Activated CD4-positive, alpha-beta memory T cell treated with anti-CD3 and anti-CD28 coated beads, Interleukin-2, amount 10 ng/mL, durations not matched to agents 7 days and 5 days (primary cell): ENCODE measurements at regions of chr1 and their contacts with region 1.

Region 1: GRCh38 chr1:29202584-29203340 is 21.1 kb upstream of the SRSF4 start:
- DNase-seq: peak; percentile 90
- H3K4me3 Mint-ChIP-seq: no peak overlapping the region
- H3K27ac Mint-ChIP-seq: no peak overlapping the region
- H3K4me1 Mint-ChIP-seq: peaks cover 6% of the 10 kb centered on the region
- H3K27me3 Mint-ChIP-seq: no peaks in the 10 kb centered on the region

Region 2: GRCh38 chr1:28782011-28782410 is 420.8 kb before region 1 on chr1:
- CTCF ChIA-PET with region 1: interaction called, 14 read pairs
- POLR2A ChIA-PET with region 1: no interaction called
- DNase-seq: no peak
- H3K4me3 Mint-ChIP-seq: no peak overlapping the region
- H3K27ac Mint-ChIP-seq: no peak overlapping the region
- H3K4me1 Mint-ChIP-seq: peaks cover 7% of the 10 kb centered on the region
- H3K27me3 Mint-ChIP-seq: peaks cover 12% of the 10 kb centered on the region

Region 3: GRCh38 chr1:29033829-29034466 is 168.8 kb before region 1 on chr1:
- CTCF ChIA-PET with region 1: interaction called, 26 read pairs
- POLR2A ChIA-PET with region 1: no interaction called
- DNase-seq: no peak
- H3K4me3 Mint-ChIP-seq: no peak overlapping the region
- H3K27ac Mint-ChIP-seq: no peak overlapping the region
- H3K4me1 Mint-ChIP-seq: no peaks in the 10 kb centered on the region
- H3K27me3 Mint-ChIP-seq: no peaks in the 10 kb centered on the region

Region 4: DNA sequence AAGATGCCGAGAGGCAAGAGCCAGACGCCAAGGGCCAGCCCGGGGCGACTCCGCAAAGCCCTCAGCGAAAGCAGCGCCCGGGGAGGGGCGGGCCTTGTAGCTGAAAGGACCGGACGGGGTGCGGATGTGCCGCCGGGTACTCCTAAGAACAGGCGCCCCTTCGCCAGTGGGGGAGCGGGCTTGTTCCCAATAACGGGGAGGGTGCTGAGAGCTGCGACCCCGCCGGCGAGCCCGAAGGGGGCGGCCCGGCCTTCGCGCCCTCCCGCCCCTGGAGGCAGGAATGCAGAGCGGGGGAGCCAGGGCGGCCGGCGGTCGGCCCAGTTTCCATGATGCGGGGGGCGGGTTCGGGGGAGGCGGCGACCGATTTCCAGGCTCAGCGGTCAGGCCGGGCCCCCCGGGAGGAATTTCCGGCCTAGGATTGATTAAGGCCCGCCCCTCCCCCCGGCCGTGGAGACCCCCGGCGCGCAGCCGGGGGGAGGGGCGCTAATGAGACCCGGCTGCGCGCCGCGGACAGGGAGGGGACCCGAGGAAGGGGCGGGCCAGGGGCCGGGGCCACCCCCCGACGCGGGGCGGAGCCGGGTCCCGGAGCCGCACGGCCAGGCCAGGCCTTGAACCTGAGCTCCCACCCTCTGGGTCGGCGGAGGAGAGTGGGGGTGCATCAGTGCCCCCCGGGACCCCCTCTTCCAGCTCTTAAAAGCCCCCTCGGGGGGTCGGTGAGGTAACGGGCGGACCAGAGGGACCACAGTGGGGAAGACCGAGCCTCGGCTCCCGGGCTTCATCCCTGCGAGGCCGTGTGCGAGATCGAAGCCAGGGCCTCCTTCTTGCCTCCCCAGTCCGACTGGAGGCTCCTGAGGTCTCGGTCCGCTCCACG is 78.2 kb before region 1 on chr1:
- CTCF ChIA-PET with region 1: interaction called, 10 read pairs
- POLR2A ChIA-PET with region 1: interaction called, 3 read pairs
- DNase-seq: peak; percentile 63
- H3K4me3 Mint-ChIP-seq: peak overlapping the region; percentile 67
- H3K27ac Mint-ChIP-seq: no peak overlapping the region
- H3K4me1 Mint-ChIP-seq: peaks cover 14% of the 10 kb centered on the region
- H3K27me3 Mint-ChIP-seq: peaks cover 36% of the 10 kb centered on the region

Region 5: GRCh38 chr1:29171089-29171488 is 31.7 kb before region 1 on chr1:
- CTCF ChIA-PET with region 1: interaction called, 21 read pairs
- POLR2A ChIA-PET with region 1: interaction called, 3 read pairs
- DNase-seq: no peak
- H3K4me3 Mint-ChIP-seq: no peak overlapping the region
- H3K27ac Mint-ChIP-seq: peak overlapping the region; percentile 12
- H3K4me1 Mint-ChIP-seq: peaks cover 60% of the 10 kb centered on the region
- H3K27me3 Mint-ChIP-seq: no peaks in the 10 kb centered on the region

Region 6: DNA sequence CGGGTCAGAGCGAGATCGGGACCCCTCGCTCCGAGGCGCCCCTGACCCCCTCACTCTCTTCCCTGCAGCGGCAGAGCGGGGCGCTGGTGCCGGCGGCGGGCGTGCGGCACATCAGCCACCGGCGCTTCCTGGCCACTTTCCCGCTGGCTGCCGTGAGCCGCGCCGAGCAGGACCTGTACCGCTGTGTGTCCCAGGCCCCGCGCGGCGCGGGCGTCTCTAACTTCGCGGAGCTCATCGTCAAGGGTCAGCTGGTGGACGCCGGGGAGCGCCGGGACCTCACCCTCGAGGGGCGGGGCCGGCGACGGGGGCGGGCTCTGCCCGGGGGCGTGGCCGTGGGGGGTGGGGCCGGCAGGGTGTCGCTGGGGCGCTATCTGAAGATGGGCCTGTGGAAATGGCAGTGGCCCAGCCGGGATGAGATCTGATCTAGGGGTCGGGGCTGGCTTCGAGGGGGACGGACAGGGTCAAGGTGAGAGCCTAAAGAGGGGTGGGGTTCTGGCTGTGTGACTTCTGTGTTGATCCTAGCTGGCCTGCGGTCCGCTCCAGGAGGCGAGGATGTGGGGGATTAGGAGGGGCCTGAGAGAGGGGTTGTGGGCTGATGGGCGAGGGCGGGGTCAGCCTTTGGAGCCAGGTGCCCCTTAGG is 57.2 kb after region 1 on chr1:
- CTCF ChIA-PET with region 1: no interaction called
- POLR2A ChIA-PET with region 1: no interaction called
- DNase-seq: peak; percentile 31
- H3K4me3 Mint-ChIP-seq: peak overlapping the region; percentile 58
- H3K27ac Mint-ChIP-seq: no peak overlapping the region
- H3K4me1 Mint-ChIP-seq: peaks cover 3% of the 10 kb centered on the region
- H3K27me3 Mint-ChIP-seq: peaks cover 45% of the 10 kb centered on the region